AG04450 (cell line): ENCODE measurements at regions of chr5 and their contacts with region 1.

Region 1: GRCh38 chr5:148957591-148958202 is 105.2 kb downstream of the SH3TC2 start:
- DNase-seq: no peak
- H3K4me3 ChIP-seq: no peak overlapping the region
- H3K27ac ChIP-seq: no peak overlapping the region
- H3K27me3 ChIP-seq: no peaks in the 10 kb centered on the region
- CTCF ChIP-seq: peak; percentile 90

Region 2: DNA sequence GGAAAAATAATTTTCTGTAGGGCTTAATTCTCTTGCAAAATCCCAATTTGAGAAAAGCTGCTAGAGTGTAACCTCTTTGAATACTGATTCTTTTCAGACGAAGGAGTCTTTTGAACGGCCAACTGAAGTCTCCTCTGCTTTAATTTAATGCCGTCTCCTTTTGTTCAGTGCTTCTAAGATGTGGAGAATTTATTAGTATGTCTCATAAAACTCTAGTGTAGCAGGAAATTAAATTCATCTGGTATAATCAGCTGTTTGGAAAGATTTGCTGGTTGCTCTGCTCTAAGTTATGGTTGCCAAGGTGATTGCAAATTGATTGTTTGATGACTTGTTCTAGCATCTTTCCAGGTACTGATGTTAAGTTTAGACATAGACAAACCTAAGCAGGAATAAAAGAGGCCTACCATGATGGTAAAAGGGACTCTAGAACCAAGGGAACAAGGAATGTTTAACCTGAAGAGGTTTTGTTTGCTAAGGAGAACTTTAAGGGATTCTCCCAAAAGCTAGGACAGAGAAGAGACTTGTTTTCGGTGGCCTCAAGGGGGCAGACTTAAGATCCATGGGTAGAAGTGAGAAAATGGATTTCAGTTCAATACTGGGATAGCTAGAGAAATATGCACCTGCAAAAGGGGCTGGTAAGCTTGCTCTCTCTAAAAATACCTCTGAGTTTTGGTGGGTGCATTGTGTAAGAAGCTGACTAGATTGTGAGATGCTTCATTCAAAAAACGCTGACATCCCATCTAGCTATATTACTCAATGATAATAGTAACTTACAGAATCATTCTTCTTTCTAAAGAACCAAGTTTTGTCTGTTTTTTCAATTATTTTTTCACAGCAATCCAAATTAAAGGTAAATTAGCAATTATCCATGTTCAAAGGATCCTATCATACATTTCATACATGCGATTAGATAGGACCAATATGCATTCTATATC is 137.0 kb before region 1 on chr5:
- CTCF ChIA-PET with region 1: interaction called, 25 read pairs
- POLR2A ChIA-PET with region 1: no interaction called
- DNase-seq: no peak
- H3K4me3 ChIP-seq: no peak overlapping the region
- H3K27ac ChIP-seq: no peak overlapping the region
- H3K27me3 ChIP-seq: no peaks in the 10 kb centered on the region
- CTCF ChIP-seq: peak; percentile 68

Region 3: GRCh38 chr5:148932355-148932935 is 25.3 kb before region 1 on chr5:
- CTCF ChIA-PET with region 1: interaction called, 13 read pairs
- POLR2A ChIA-PET with region 1: no interaction called
- DNase-seq: no peak
- H3K4me3 ChIP-seq: no peak overlapping the region
- H3K27ac ChIP-seq: no peak overlapping the region
- H3K27me3 ChIP-seq: no peaks in the 10 kb centered on the region
- CTCF ChIP-seq: no peak

Region 4: GRCh38 chr5:148972958-148973357 is 15.3 kb after region 1 on chr5:
- CTCF ChIA-PET with region 1: interaction called, 37 read pairs
- POLR2A ChIA-PET with region 1: no interaction called
- DNase-seq: peak; percentile 53
- H3K4me3 ChIP-seq: no peak overlapping the region
- H3K27ac ChIP-seq: peak overlapping the region; percentile 77
- H3K27me3 ChIP-seq: no peaks in the 10 kb centered on the region
- CTCF ChIP-seq: 0 out of 2 replicates have a peak, but pooled peaks have one; percentile 15

Region 5: DNA sequence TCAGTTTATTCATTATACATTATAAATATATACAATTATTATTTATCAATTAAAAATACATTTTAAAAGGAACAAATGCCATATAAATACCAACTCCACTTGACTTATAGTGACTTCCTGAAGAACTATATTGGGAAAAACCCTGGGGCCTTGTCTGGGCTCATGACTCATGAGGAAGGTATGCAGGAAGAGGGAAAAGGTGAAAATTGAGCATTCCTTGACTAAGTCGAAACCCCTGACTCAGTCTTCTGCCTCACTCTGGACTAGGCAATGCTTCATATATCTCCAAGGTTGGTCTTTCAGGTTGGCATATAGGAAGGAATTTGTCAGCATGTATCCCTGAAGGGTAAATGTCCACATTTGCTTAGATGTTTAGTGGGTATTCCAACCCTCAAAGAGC is 26.6 kb after region 1 on chr5:
- CTCF ChIA-PET with region 1: interaction called, 12 read pairs
- POLR2A ChIA-PET with region 1: no interaction called
- DNase-seq: no peak
- H3K4me3 ChIP-seq: no peak overlapping the region
- H3K27ac ChIP-seq: no peak overlapping the region
- H3K27me3 ChIP-seq: no peaks in the 10 kb centered on the region
- CTCF ChIP-seq: no peak

Region 6: DNA sequence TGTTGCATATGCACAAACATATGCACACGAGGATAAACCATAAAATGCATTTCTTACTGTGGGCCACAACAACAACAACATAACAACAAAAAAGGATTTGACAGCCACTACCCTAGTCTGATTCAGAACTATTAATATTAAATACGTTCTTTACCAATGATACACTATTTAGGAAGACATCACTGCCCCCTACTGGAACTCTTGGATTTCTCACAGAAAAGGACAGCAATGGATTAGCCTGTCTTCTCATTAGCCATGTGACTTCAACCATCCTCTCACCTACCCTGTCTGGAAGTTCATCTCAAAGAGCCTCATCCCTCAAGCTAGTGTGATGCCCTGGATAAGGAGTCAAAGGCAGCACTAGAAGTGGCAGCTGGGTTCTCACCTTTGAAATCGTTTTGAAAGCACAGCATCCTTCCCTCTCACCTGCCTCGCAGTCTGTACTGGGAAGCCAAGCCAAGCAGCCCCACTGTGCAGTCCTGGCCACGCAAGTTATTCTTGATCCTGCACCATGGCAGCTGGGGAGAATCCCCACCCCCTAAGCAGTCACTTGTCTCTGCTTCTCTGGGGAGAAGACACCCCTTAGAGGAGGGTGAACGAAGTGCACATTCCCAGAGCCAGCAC is 40.6 kb after region 1 on chr5:
- CTCF ChIA-PET with region 1: interaction called, 18 read pairs
- POLR2A ChIA-PET with region 1: no interaction called
- DNase-seq: no peak
- H3K4me3 ChIP-seq: no peak overlapping the region
- H3K27ac ChIP-seq: no peak overlapping the region
- H3K27me3 ChIP-seq: no peaks in the 10 kb centered on the region
- CTCF ChIP-seq: peak; percentile 69

Region 7: GRCh38 chr5:149497357-149497756 is 539.7 kb after region 1 on chr5:
- CTCF ChIA-PET with region 1: no interaction called
- POLR2A ChIA-PET with region 1: no interaction called
- DNase-seq: peak; percentile 91
- H3K4me3 ChIP-seq: no peak overlapping the region
- H3K27ac ChIP-seq: peak overlapping the region; percentile 85
- H3K27me3 ChIP-seq: no peaks in the 10 kb centered on the region
- CTCF ChIP-seq: no peak; the same call in 1 of the 2 replicates